ENCODE measurements at regions of chr1 and their contacts with region 1.

Region 1: DNA sequence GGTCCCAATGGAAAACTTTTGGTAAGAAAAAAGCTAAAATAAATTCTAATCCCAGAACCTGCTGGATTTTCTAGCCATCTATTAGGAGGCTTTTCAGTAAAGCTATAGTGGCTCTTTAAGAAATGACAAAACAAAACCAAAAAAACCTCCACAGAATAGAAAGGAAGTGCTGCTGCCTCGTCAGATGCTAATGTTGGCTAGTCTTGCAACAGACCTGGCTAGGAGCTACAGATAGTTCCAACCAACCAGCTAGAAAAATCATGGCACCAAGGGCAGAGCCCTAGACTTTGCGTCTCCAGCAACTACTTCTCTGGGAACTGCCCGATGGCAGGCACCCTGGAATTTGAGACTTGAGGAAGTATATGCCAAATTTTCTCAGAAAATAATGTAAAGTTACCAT is 7.6 kb downstream of the CD101 start:
- DNase-seq: peak in 6 of 9 experiments; percentile 16 to 58 (median 38)
- ATAC-seq: peak; percentile 51
- H3K4me3 ChIP-seq: peak overlapping the region in 1 of 2 experiments; percentile 20
- H3K4me3 Mint-ChIP-seq: peak overlapping the region; percentile 64
- H3K27ac ChIP-seq: peak overlapping the region; percentile 9 to 50
- H3K27ac Mint-ChIP-seq: peak overlapping the region; percentile 92
- H3K4me1 ChIP-seq: peaks cover 53% of the 10 kb centered on the region
- H3K4me1 Mint-ChIP-seq: peaks cover 77% of the 10 kb centered on the region
- H3K27me3 ChIP-seq: no peaks in the 10 kb centered on the region
- H3K27me3 Mint-ChIP-seq: no peaks in the 10 kb centered on the region
- CTCF ChIP-seq: no peak

Region 2: GRCh38 chr1:115098979-115099692 is 1910.0 kb before region 1 on chr1:
- CTCF ChIA-PET with region 1: no interaction called
- POLR2A ChIA-PET with region 1: no interaction called
- intact Hi-C with region 1: loop called in 1 of 2 experiments (anchors 5 kb)
- DNase-seq: peak; percentile 55 to 96 (median 74)
- ATAC-seq: peak; percentile 89
- H3K4me3 ChIP-seq: peak overlapping the region; percentile 51 to 56
- H3K4me3 Mint-ChIP-seq: peak overlapping the region; percentile 86
- H3K27ac ChIP-seq: peak overlapping the region; percentile 95
- H3K27ac Mint-ChIP-seq: peak overlapping the region; percentile 97
- H3K4me1 ChIP-seq: peaks cover 27% of the 10 kb centered on the region
- H3K4me1 Mint-ChIP-seq: peaks cover 36% of the 10 kb centered on the region
- H3K27me3 ChIP-seq: no peaks in the 10 kb centered on the region
- H3K27me3 Mint-ChIP-seq: no peaks in the 10 kb centered on the region
- CTCF ChIP-seq: no peak

Region 3: GRCh38 chr1:116987256-116987555 is 21.9 kb before region 1 on chr1:
- CTCF ChIA-PET with region 1: interaction called, 8 read pairs
- POLR2A ChIA-PET with region 1: interaction called, 8 read pairs
- intact Hi-C with region 1: loop called in 1 of 2 experiments (anchors 1 kb)
- DNase-seq: peak; percentile 43 to 83 (median 74)
- ATAC-seq: peak; percentile 91
- H3K4me3 ChIP-seq: peak overlapping the region; percentile 29 to 53
- H3K4me3 Mint-ChIP-seq: peak overlapping the region; percentile 85
- H3K27ac ChIP-seq: peak overlapping the region; percentile 49 to 85
- H3K27ac Mint-ChIP-seq: peak overlapping the region; percentile 98
- H3K4me1 ChIP-seq: peaks cover 52% of the 10 kb centered on the region
- H3K4me1 Mint-ChIP-seq: peaks cover 69% of the 10 kb centered on the region
- H3K27me3 ChIP-seq: no peaks in the 10 kb centered on the region
- H3K27me3 Mint-ChIP-seq: no peaks in the 10 kb centered on the region
- CTCF ChIP-seq: no peak

Region 4: GRCh38 chr1:117336088-117336817 is 327.1 kb after region 1 on chr1:
- CTCF ChIA-PET with region 1: no interaction called
- POLR2A ChIA-PET with region 1: no interaction called
- intact Hi-C with region 1: no loop called
- DNase-seq: no peak
- ATAC-seq: no peak
- H3K4me3 ChIP-seq: no peak overlapping the region
- H3K4me3 Mint-ChIP-seq: no peak overlapping the region
- H3K27ac ChIP-seq: no peak overlapping the region
- H3K27ac Mint-ChIP-seq: no peak overlapping the region
- H3K4me1 ChIP-seq: no peaks in the 10 kb centered on the region
- H3K4me1 Mint-ChIP-seq: peaks cover 12% of the 10 kb centered on the region
- H3K27me3 ChIP-seq: no peaks in the 10 kb centered on the region
- H3K27me3 Mint-ChIP-seq: peaks cover 3% of the 10 kb centered on the region
- CTCF ChIP-seq: no peak